Mammary epithelial cell (primary cell): ENCODE measurements at regions of chrX and their contacts with region 1.

Region 1: GRCh38 chrX:68084765-68085164 is 348.5 kb downstream of the OPHN1 start:
- DNase-seq: peak; percentile 1
- H3K4me3 ChIP-seq: no peak overlapping the region
- H3K27ac ChIP-seq: no peak overlapping the region
- H3K4me1 ChIP-seq: no peaks in the 10 kb centered on the region
- H3K27me3 ChIP-seq: no peaks in the 10 kb centered on the region
- CTCF ChIP-seq: no peak

Region 2: GRCh38 chrX:68018681-68019111 is 66.1 kb before region 1 on chrX:
- CTCF ChIA-PET with region 1: no interaction called
- dilution Hi-C with region 1: no loop called
- in situ Hi-C with region 1: no loop called
- intact Hi-C with region 1: loop called (anchors 10 kb)
- DNase-seq: peak; percentile 26
- H3K4me3 ChIP-seq: no peak overlapping the region
- H3K27ac ChIP-seq: no peak overlapping the region
- H3K4me1 ChIP-seq: no peaks in the 10 kb centered on the region
- H3K27me3 ChIP-seq: no peaks in the 10 kb centered on the region
- CTCF ChIP-seq: peak; percentile 43 to 53

Region 3: DNA sequence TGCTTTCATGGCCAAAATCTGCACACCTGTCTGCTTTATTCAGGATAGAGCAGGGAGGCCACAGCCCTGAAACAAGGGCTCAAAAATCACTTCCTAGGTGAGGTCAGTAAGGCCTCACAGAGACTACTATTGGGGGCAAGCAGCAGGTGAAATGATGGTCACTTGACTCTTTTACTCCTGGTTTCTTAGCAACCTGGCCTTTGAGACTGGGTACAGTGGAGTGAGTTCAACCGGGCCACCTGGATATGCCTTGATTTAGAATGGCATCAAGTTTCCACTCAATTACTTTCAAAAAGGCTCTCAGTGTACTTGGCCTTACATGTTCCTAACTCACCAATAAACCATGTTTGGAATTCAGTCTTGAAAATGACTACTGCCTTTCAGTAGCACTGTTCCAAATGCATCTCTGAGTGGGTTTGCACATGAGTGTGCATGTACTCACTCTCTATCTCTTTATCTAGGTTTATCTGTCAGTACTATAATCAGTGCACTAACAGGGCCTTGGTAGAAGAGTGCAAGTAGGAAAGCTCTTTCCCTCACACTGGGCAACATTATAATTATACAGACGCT is 39.7 kb before region 1 on chrX:
- CTCF ChIA-PET with region 1: no interaction called
- dilution Hi-C with region 1: no loop called
- in situ Hi-C with region 1: no loop called
- intact Hi-C with region 1: no loop called
- DNase-seq: no peak
- H3K4me3 ChIP-seq: no peak overlapping the region
- H3K27ac ChIP-seq: no peak overlapping the region
- H3K4me1 ChIP-seq: no peaks in the 10 kb centered on the region
- H3K27me3 ChIP-seq: no peaks in the 10 kb centered on the region
- CTCF ChIP-seq: no peak